Ascending aorta (tissue), 2 donors: ENCODE measurements at regions of chr17 and their contacts with region 1.

Region 1: GRCh38 chr17:35808962-35809854 is at the start of gene TAF15:
- DNase-seq: peak; percentile 85 to 97
- H3K4me3 ChIP-seq: peak within 1 kb of the TSS; percentile 80 to 89
- H3K27ac ChIP-seq: peak within 1 kb of the TSS; percentile 91 to 95
- H3K4me1 ChIP-seq: peaks cover 4 to 39% of the 10 kb centered on the region in 2 donors
- H3K27me3 ChIP-seq: no peaks in the 10 kb centered on the region
- CTCF ChIP-seq: peak; percentile 53 to 85 (median 77)
- total RNA-seq, gene TAF15: 49.6 TPM

Region 2: GRCh38 chr17:34254651-34255380 is 1554.4 kb before region 1 on chr17 and contains the start of gene CCL2:
- intact Hi-C with region 1: loop called (anchors 10 kb)
- DNase-seq: peak in 1 of 2 donors; percentile 86
- H3K4me3 ChIP-seq: peak within 1 kb of the TSS; percentile 46 to 56
- H3K27ac ChIP-seq: peak within 1 kb of the TSS; percentile 87 to 89
- H3K4me1 ChIP-seq: peaks cover 39 to 60% of the 10 kb centered on the region in 2 donors
- H3K27me3 ChIP-seq: no peaks in the 10 kb centered on the region
- CTCF ChIP-seq: no peak
- total RNA-seq, gene CCL2: 162 TPM

Region 3: GRCh38 chr17:34980681-34981537 is 828.3 kb before region 1 on chr17:
- intact Hi-C with region 1: loop called (anchors 5 kb)
- DNase-seq: peak in 1 of 2 donors; percentile 82
- H3K4me3 ChIP-seq: peak overlapping the region; percentile 96 to 97
- H3K27ac ChIP-seq: peak overlapping the region; percentile 99 to 100
- H3K4me1 ChIP-seq: peaks cover 0 to 22% of the 10 kb centered on the region in 2 donors
- H3K27me3 ChIP-seq: no peaks in the 10 kb centered on the region
- CTCF ChIP-seq: peak in 2 of 3 experiments; percentile 18 to 48

Region 4: GRCh38 chr17:35432176-35433074 is 376.8 kb before region 1 on chr17 and contains the start of gene SLFN12:
- intact Hi-C with region 1: loop called (anchors 1 kb)
- DNase-seq: peak in 1 of 2 donors; percentile 85
- H3K4me3 ChIP-seq: peak within 1 kb of the TSS; percentile 68 to 70
- H3K27ac ChIP-seq: peak within 1 kb of the TSS; percentile 84 to 91
- H3K4me1 ChIP-seq: peaks cover 0 to 19% of the 10 kb centered on the region in 2 donors
- H3K27me3 ChIP-seq: no peaks in the 10 kb centered on the region
- CTCF ChIP-seq: no peak
- total RNA-seq, gene SLFN12: 6.8 TPM

Region 5: DNA sequence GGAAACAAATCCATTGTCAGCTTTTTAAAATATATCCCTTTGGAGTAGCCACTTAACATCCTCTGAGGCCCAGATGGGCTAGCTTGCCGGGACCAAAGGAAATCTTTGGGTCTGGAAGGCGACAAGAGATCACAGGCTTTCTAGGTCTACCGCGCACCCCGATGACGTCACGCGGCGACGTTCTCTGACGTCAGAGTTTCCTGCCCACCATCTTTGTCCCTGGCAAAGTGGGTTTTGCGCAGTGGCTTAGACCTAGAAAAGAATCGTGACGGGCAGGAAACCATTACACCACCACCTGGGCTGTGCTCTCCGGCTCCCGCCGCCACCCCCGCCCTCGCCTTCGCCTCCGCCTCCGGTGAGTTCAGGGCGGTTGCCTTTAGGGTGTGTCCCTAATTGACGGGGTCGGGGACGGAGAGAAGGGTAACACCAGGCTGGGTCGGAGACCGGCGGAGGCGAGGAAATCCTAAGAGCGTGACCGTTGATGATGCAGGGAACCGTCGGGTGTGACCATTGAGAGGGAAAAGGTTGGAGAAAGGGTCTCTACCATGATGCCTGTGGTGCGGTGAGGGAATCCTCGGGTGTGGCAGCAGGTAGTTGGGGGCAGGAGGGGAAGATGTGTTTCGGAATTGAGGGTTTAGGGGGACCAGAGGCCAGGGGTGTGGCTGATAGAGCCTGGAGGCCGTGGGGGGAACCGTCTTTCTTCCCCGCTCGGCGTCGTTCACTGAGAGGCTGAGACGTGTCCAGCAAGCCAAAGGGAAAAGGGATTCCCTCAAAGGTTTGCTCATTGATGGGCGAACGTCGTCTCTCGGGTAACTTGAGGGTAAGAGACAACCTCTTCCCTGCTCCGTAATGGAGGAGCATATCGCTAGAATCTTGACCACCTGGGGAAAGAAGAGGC is 221.9 kb before region 1 on chr17 and contains the start of gene AP2B1:
- intact Hi-C with region 1: loop called (anchors 5 kb)
- DNase-seq: peak; percentile 81 to 98
- H3K4me3 ChIP-seq: peak within 1 kb of the TSS; percentile 82 to 99
- H3K27ac ChIP-seq: peak within 1 kb of the TSS; percentile 88 to 96
- H3K4me1 ChIP-seq: peaks cover 5 to 12% of the 10 kb centered on the region in 2 donors
- H3K27me3 ChIP-seq: no peaks in the 10 kb centered on the region
- CTCF ChIP-seq: no peak
- total RNA-seq, gene AP2B1: 59.5 TPM

Region 6: GRCh38 chr17:35695613-35696012 is 113.6 kb before region 1 on chr17:
- intact Hi-C with region 1: no loop called
- DNase-seq: no peak
- H3K4me3 ChIP-seq: no peak overlapping the region
- H3K27ac ChIP-seq: no peak overlapping the region
- H3K4me1 ChIP-seq: peaks cover 0 to 9% of the 10 kb centered on the region in 2 donors
- H3K27me3 ChIP-seq: no peaks in the 10 kb centered on the region
- CTCF ChIP-seq: no peak

Region 7: GRCh38 chr17:35713069-35713728 is 96.0 kb before region 1 on chr17:
- intact Hi-C with region 1: loop called (anchors 1 kb)
- DNase-seq: peak; percentile 37 to 91
- H3K4me3 ChIP-seq: peak overlapping the region in 1 of 2 donors; percentile 14
- H3K27ac ChIP-seq: peak overlapping the region; percentile 74 to 85
- H3K4me1 ChIP-seq: peaks cover 12 to 41% of the 10 kb centered on the region in 2 donors
- H3K27me3 ChIP-seq: no peaks in the 10 kb centered on the region
- CTCF ChIP-seq: no peak

Region 8: GRCh38 chr17:35764123-35764991 is 44.9 kb before region 1 on chr17:
- intact Hi-C with region 1: loop called (anchors 1 kb)
- DNase-seq: peak; percentile 23 to 91
- H3K4me3 ChIP-seq: peak overlapping the region; percentile 28 to 70
- H3K27ac ChIP-seq: peak overlapping the region in 1 of 2 donors; percentile 40
- H3K4me1 ChIP-seq: peaks cover 2 to 10% of the 10 kb centered on the region in 2 donors
- H3K27me3 ChIP-seq: no peaks in the 10 kb centered on the region
- CTCF ChIP-seq: peak; percentile 91 to 98 (median 97)